CD4-positive, alpha-beta memory T cell (primary cell): ENCODE measurements at regions of chr4 and their contacts with region 1.

Region 1: DNA sequence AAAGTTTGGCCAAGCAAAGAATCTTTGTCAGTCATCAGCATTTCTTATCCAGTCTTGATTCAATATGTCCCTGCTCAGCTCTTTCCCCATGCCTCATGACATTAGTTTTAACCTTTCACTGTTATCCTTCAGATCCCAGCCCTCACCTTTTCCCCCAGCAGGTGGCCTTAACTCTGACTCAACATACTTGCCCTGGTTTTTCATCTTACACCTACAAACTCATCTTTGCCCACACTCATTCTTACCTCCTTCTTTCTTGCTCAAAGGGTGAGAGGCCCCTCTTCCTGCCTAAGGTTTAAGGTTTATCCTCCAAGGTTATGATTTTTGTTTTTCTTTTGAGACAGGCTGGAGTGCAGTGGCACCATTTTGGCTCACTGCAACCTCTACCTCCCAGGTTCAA is 10.6 kb upstream of the ANXA5 start:
- DNase-seq: no peak
- H3K4me3 ChIP-seq: no peak overlapping the region
- H3K4me3 Mint-ChIP-seq: no peak overlapping the region
- H3K27ac ChIP-seq: no peak overlapping the region
- H3K27ac Mint-ChIP-seq: no peak overlapping the region
- H3K4me1 ChIP-seq: peaks cover 5% of the 10 kb centered on the region
- H3K4me1 Mint-ChIP-seq: peaks cover 4 to 12% (median 10%) of the 10 kb centered on the region in 4 donors
- H3K27me3 ChIP-seq: no peaks in the 10 kb centered on the region
- H3K27me3 Mint-ChIP-seq: peaks cover 21 to 31% of the 10 kb centered on the region in 2 donors

Region 2: DNA sequence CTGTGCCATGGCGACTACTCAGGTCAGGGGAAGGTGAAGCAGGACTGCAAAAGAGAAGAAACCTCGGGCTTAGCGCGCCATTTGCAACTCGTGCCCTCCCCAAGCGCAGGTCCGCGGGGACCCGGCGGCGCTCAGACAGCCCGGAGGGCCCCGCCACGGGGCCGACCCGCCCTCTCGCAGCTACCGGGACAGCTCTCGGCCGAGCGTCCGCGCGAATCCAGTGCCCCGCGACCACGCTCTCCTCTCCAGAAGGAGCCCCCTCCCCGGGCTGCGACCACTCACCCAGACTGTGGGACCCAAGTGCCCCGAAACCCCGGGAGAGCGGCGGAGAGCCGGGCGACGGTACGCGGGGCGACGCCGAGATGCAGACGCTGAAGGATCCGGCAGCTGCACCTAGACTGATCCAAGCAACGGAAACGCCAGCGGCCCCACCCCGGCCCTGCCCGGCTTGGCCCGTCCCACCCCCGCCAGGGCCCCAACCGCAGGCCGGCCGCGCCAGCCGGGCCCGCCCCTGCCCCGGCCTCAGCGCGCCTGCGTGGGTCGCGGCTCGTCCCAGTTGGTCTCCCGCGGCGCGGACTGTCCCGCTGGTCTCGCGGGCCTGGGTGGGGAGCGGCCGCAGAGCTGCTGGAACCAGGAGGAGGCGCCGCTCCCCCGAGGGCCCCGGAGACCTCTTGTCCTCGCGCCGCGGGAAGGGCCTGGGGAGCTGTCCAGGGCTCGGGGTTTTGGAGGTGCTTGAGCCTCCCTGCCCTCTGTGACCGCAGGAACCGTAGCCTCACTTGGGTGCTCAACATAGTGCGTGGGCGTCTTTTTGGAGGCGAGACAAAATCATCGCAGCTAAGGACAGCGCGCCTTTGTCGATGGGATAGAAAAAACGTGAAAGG is 10.5 kb before region 1 on chr4 and contains the start of gene ANXA5:
- CTCF ChIA-PET with region 1: interaction called, 4 read pairs
- POLR2A ChIA-PET with region 1: interaction called, 10 read pairs
- intact Hi-C with region 1: no loop called
- DNase-seq: peak; percentile 62 to 72 (median 70)
- H3K4me3 ChIP-seq: peak within 1 kb of the TSS; percentile 78 to 80
- H3K4me3 Mint-ChIP-seq: peak within 1 kb of the TSS; percentile 97 to 100 (median 99)
- H3K27ac ChIP-seq: peak within 1 kb of the TSS; percentile 55
- H3K27ac Mint-ChIP-seq: peak within 1 kb of the TSS; percentile 89 to 99 (median 96)
- H3K4me1 ChIP-seq: peaks cover 21% of the 10 kb centered on the region
- H3K4me1 Mint-ChIP-seq: peaks cover 29 to 37% (median 31%) of the 10 kb centered on the region in 4 donors
- H3K27me3 ChIP-seq: no peaks in the 10 kb centered on the region
- H3K27me3 Mint-ChIP-seq: peaks cover 0 to 1% of the 10 kb centered on the region in 2 donors
- total RNA-seq, gene ANXA5: 70.7 to 77.0 TPM